ENCODE measurements at regions of chr17 and their contacts with region 1.

Region 1: DNA sequence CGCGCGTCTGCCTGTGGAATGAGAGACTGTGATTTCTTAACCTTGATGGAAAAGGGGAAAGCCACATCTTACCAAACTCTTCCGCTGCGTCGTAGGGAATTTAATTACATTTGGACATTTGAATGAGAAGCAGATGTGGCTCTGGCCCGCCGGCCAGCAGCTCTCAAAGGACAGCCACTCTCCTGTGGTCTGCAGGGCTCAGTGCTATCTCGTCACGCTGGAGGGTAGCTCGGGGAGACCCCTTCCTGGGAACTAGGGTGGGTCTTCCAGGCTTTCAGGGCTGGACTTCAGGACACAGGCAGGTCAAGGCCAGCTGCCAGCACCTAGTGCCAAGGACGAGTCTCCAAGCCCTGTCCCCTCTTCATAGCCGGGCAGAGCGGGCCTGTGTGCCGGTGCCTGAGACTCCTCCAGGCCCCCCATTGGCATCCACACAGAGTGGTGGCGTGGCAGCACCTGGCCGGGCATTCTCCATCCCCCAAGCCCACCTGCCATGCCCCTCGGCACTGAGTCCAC is 15.9 kb upstream of the TBX2 start:
- DNase-seq: no peak
- ATAC-seq: no peak
- H3K4me3 ChIP-seq: no peak overlapping the region
- H3K27ac ChIP-seq: no peak overlapping the region
- H3K4me1 ChIP-seq: peaks cover 55% of the 10 kb centered on the region
- H3K27me3 ChIP-seq: no peaks in the 10 kb centered on the region
- CTCF ChIP-seq: no peak
- EP300 ChIP-seq: no peak
- POLR2A ChIP-seq: no peak
- RAD21 ChIP-seq: no peak

Region 2: GRCh38 chr17:61361084-61361483 is 22.7 kb before region 1 on chr17:
- CTCF ChIA-PET with region 1: no interaction called
- POLR2A ChIA-PET with region 1: interaction called, 14 read pairs
- in situ Hi-C with region 1: no loop called
- intact Hi-C with region 1: loop called (anchors 1 kb)
- DNase-seq: peak; percentile 66
- ATAC-seq: no peak
- H3K4me3 ChIP-seq: no peak overlapping the region
- H3K27ac ChIP-seq: no peak overlapping the region
- H3K4me1 ChIP-seq: peaks cover 99% of the 10 kb centered on the region
- H3K27me3 ChIP-seq: no peaks in the 10 kb centered on the region
- CTCF ChIP-seq: no peak
- EP300 ChIP-seq: peak in 1 of 2 experiments; percentile 63; a peak in 2 of 4 replicates
- POLR2A ChIP-seq: no peak
- RAD21 ChIP-seq: no peak

Region 3: GRCh38 chr17:61372045-61372810 is 11.5 kb before region 1 on chr17:
- CTCF ChIA-PET with region 1: no interaction called
- POLR2A ChIA-PET with region 1: no interaction called
- in situ Hi-C with region 1: no loop called
- intact Hi-C with region 1: no loop called
- DNase-seq: no peak
- ATAC-seq: no peak
- H3K4me3 ChIP-seq: no peak overlapping the region
- H3K27ac ChIP-seq: no peak overlapping the region
- H3K4me1 ChIP-seq: peaks cover 48% of the 10 kb centered on the region
- H3K27me3 ChIP-seq: no peaks in the 10 kb centered on the region
- CTCF ChIP-seq: no peak
- EP300 ChIP-seq: no peak
- POLR2A ChIP-seq: no peak
- RAD21 ChIP-seq: no peak

Region 4: GRCh38 chr17:61426013-61426730 is 42.4 kb after region 1 on chr17:
- CTCF ChIA-PET with region 1: no interaction called
- POLR2A ChIA-PET with region 1: no interaction called
- in situ Hi-C with region 1: no loop called
- intact Hi-C with region 1: no loop called
- DNase-seq: peak; percentile 85
- ATAC-seq: peak; percentile 94
- H3K4me3 ChIP-seq: 0 out of 6 replicates have a peak overlapping the region, but pooled peaks of 1 of the 3 experiments have one; percentile 23
- H3K27ac ChIP-seq: peak overlapping the region; percentile 57
- H3K4me1 ChIP-seq: peaks cover 41% of the 10 kb centered on the region
- H3K27me3 ChIP-seq: no peaks in the 10 kb centered on the region
- CTCF ChIP-seq: peak; percentile 98
- EP300 ChIP-seq: 0 out of 4 replicates have a peak, but pooled peaks of 1 of the 2 experiments have one; percentile 28
- POLR2A ChIP-seq: no peak
- RAD21 ChIP-seq: peak; percentile 97

Region 5: DNA sequence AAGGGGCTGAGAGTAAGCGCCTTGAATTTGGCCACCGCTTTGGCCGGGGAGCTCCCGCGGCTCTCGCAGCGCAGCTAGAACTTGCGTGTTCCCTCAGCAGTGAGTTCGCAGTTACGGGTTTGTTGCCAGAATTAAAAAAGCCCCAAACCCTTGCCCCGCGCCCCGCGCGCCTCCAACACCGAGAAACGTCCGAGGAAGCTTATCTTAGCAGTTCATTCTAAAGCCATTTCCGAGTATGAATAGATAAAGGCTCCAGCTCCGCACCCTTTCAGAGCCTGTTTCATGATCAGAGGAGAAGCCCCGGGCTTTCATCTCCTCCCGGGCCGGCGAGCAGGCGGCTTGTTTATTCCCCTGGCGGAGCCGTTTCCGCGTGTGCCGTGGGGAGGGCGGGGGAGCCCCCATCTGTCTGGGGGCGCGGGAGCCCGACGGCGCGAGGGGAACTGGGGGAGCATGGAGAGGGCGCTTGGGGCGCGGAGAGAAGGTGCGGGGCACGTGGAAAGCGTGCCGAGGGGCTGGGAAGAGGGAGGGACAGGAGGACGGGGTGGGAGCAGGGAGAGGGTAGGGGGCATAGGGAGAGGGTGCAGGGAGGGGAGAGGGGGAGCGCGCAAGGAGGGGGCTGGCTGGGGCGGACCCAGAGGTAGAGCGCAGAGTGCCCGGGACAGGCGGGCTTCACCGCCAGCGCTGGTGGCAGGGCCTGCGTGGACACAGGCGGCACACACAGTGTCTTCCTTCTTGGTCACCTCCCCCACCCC is 78.4 kb after region 1 on chr17:
- CTCF ChIA-PET with region 1: no interaction called
- POLR2A ChIA-PET with region 1: no interaction called
- in situ Hi-C with region 1: no loop called
- intact Hi-C with region 1: no loop called
- DNase-seq: peak; percentile 56
- ATAC-seq: peak; percentile 45
- H3K4me3 ChIP-seq: peak overlapping the region; percentile 46 to 62 (median 61)
- H3K27ac ChIP-seq: peak overlapping the region; percentile 69
- H3K4me1 ChIP-seq: peaks cover 71% of the 10 kb centered on the region
- H3K27me3 ChIP-seq: no peaks in the 10 kb centered on the region
- CTCF ChIP-seq: no peak
- EP300 ChIP-seq: no peak
- POLR2A ChIP-seq: no peak
- RAD21 ChIP-seq: no peak

Measured in HepG2 (cell line).